Right ventricle myocardium superior (tissue), 1 donor: ENCODE measurements at regions of chr3 and their contacts with region 1.

Region 1: DNA sequence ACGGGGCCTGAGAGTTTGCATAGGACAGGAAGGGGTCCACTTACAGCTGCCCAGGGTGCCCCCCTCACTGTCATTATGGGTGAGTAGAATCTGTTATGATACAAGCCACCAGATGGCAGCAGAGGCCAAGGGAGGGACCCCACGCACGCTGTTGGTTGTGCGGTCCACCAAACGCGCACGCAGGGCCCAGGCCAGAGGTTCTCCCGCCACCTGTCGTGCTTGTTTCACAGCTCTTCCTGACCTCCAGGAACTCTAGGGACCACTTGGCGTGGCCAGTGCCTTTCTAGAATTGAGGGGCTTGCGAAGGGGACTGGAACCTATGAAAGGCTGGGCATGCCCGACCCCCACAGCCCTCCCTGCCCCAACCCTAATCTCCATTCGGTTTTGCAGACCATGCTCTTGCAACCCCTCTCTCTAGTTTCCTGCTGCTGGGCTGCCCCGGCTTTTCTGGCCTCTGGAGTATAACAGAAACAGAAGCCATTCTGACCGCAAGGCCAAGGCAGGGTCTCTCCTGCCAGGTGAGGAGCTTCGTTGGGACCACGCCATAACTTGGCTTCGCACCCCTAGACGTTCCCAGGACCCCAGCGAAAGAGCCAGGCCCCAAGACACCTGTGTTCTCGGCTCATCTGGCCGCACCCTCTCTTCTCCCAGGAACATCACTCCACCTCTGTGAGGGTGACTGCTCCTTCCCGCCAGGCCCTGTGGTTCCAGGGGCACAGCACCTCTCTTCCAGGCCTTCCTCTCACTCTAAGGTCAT is 46.0 kb downstream of the ALDH1L1 start:
- DNase-seq: peak; percentile 72
- ATAC-seq: peak; percentile 94

Region 2: GRCh38 chr3:126197854-126198584 is 63.6 kb after region 1 on chr3:
- intact Hi-C with region 1: loop called (anchors 5 kb)
- DNase-seq: peak; percentile 69
- ATAC-seq: peak; percentile 93

Region 3: DNA sequence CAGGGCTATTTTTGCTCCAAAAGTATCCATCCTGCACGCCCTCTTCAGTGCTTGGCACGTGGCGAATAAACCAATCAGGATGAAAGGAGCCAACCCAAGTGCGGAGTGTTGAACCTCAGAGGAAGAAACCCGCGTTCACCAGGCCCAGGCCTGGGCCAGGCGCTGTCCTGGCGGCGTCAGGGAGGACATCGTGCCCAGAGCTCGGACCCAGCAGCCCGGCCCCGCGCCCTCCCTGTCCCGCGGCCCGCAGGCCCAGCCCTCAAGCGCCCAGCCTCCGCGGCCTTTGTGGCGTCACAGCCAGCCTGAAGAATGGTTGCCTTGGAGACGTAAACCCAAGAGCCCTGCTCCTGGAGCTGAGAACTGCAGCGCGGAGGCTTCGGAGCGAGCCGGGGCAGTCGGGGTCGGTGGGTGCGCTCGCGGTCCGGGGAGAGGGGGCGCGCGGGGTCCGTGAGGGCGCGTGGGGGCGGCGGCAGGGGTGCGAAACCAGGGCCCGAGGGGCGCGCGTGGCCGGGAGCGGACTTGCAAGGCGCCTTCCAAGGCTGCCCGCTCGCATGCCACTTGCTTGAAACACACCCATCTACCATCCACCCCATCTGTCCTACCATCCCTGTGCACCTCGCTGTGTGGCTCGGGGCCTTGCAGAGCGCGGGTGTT is 260.3 kb after region 1 on chr3 and contains the start of gene CFAP100:
- intact Hi-C with region 1: loop called (anchors 5 kb)
- DNase-seq: peak; percentile 71
- ATAC-seq: peak; percentile 73
- total RNA-seq, gene CFAP100: not detected